H1 (cell line): ENCODE measurements at regions of chr3 and their contacts with region 1.

Region 1: GRCh38 chr3:5568458-5568857 is 381.0 kb downstream of the EDEM1 start:
- DNase-seq: no peak
- H3K4me3 ChIP-seq: no peak overlapping the region
- H3K27ac ChIP-seq: no peak overlapping the region
- H3K4me1 ChIP-seq: no peaks in the 10 kb centered on the region
- H3K27me3 ChIP-seq: no peaks in the 10 kb centered on the region
- CTCF ChIP-seq: peak in 2 of 3 experiments; percentile 57 to 65; a peak in 3 of 4 replicates
- EP300 ChIP-seq: no peak
- POLR2A ChIP-seq: no peak
- RAD21 ChIP-seq: peak; percentile 71 to 72

Region 2: GRCh38 chr3:5122030-5122740 is 446.3 kb before region 1 on chr3 and contains the start of gene ARL8B:
- CTCF ChIA-PET with region 1: no interaction called
- POLR2A ChIA-PET with region 1: no interaction called
- DNase-seq: peak; percentile 29 to 94
- H3K4me3 ChIP-seq: peak within 1 kb of the TSS; percentile 73 to 98 (median 90)
- H3K27ac ChIP-seq: peak within 1 kb of the TSS; percentile 89
- H3K4me1 ChIP-seq: peaks cover 0 to 2% (median 0%) of the 10 kb centered on the region in 4 experiments; a peak in 1 of 7 replicates
- H3K27me3 ChIP-seq: no peaks in the 10 kb centered on the region
- CTCF ChIP-seq: peak; percentile 93 to 98 (median 98)
- EP300 ChIP-seq: peak in 1 of 2 experiments; percentile 73; a peak in 1 of 3 replicates
- POLR2A ChIP-seq: peak; percentile 70 to 87
- RAD21 ChIP-seq: peak; percentile 43 to 50; a peak in 3 of 4 replicates
- total RNA-seq, gene ARL8B: 25.8 and 27.8 TPM in 2 replicates

Region 3: GRCh38 chr3:5499404-5499803 is 69.1 kb before region 1 on chr3:
- CTCF ChIA-PET with region 1: no interaction called
- POLR2A ChIA-PET with region 1: no interaction called
- DNase-seq: no peak
- H3K4me3 ChIP-seq: no peak overlapping the region
- H3K27ac ChIP-seq: no peak overlapping the region
- H3K4me1 ChIP-seq: peaks cover 0 to 3% (median 0%) of the 10 kb centered on the region in 4 experiments; a peak in 1 of 7 replicates
- H3K27me3 ChIP-seq: no peaks in the 10 kb centered on the region
- CTCF ChIP-seq: no peak
- EP300 ChIP-seq: no peak
- POLR2A ChIP-seq: no peak
- RAD21 ChIP-seq: no peak

Region 4: GRCh38 chr3:5554245-5554747 is 14.2 kb before region 1 on chr3:
- CTCF ChIA-PET with region 1: interaction called, 12 read pairs
- POLR2A ChIA-PET with region 1: no interaction called
- DNase-seq: no peak
- H3K4me3 ChIP-seq: no peak overlapping the region
- H3K27ac ChIP-seq: no peak overlapping the region
- H3K4me1 ChIP-seq: no peaks in the 10 kb centered on the region
- H3K27me3 ChIP-seq: no peaks in the 10 kb centered on the region
- CTCF ChIP-seq: no peak
- EP300 ChIP-seq: no peak
- POLR2A ChIP-seq: no peak
- RAD21 ChIP-seq: no peak

Region 5: DNA sequence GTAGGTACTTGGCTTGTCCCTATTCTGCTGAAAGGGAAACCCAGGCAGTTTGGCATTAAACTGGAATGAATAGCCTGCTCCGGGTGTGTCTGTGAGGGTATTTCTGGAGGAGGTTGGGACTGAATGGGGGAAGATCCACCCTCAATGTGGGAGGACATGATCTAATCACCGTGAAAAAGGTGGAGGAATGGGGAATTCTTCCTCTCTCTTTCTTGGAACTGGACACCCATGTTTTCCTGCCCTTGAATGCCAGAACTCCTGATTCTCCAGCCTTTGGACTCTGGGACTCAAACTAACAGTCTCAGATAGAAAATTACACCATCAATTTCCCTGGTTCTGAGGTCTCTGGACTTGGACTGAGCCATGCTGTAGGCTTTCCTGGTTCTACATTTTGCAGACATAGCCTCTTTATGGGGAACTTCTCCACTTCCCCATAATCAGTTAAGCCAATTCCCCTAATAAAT is 10.7 kb after region 1 on chr3:
- CTCF ChIA-PET with region 1: interaction called, 14 read pairs
- POLR2A ChIA-PET with region 1: no interaction called
- DNase-seq: no peak
- H3K4me3 ChIP-seq: no peak overlapping the region
- H3K27ac ChIP-seq: no peak overlapping the region
- H3K4me1 ChIP-seq: peaks cover 0 to 5% (median 0%) of the 10 kb centered on the region in 4 experiments; a peak in 1 of 7 replicates
- H3K27me3 ChIP-seq: no peaks in the 10 kb centered on the region
- CTCF ChIP-seq: no peak
- EP300 ChIP-seq: no peak
- POLR2A ChIP-seq: no peak
- RAD21 ChIP-seq: no peak

Region 6: GRCh38 chr3:5663601-5664000 is 95.1 kb after region 1 on chr3:
- CTCF ChIA-PET with region 1: no interaction called
- POLR2A ChIA-PET with region 1: no interaction called
- DNase-seq: no peak
- H3K4me3 ChIP-seq: no peak overlapping the region
- H3K27ac ChIP-seq: no peak overlapping the region
- H3K4me1 ChIP-seq: no peaks in the 10 kb centered on the region
- H3K27me3 ChIP-seq: no peaks in the 10 kb centered on the region
- CTCF ChIP-seq: no peak
- EP300 ChIP-seq: no peak
- POLR2A ChIP-seq: no peak
- RAD21 ChIP-seq: no peak